ENCODE measurements at regions of chr15 and their contacts with region 1.

Region 1: GRCh38 chr15:31488426-31489204 is 162.0 kb downstream of the KLF13 start:
- DNase-seq: peak in 4 of 5 donors; percentile 64 to 69 (median 66)
- H3K4me3 ChIP-seq: no peak overlapping the region
- H3K4me3 Mint-ChIP-seq: peak overlapping the region in 1 of 8 donors; percentile 30
- H3K27ac ChIP-seq: no peak overlapping the region
- H3K27ac Mint-ChIP-seq: peak overlapping the region in 5 of 7 donors; percentile 17 to 77 (median 72)
- H3K4me1 ChIP-seq: peaks cover 37% of the 10 kb centered on the region
- H3K4me1 Mint-ChIP-seq: peaks cover 14 to 51% (median 24%) of the 10 kb centered on the region in 4 donors
- H3K27me3 ChIP-seq: no peaks in the 10 kb centered on the region
- H3K27me3 Mint-ChIP-seq: no peaks in the 10 kb centered on the region

Region 2: GRCh38 chr15:31128919-31129768 is 359.5 kb before region 1 on chr15:
- CTCF ChIA-PET with region 1: interaction called, 34 read pairs
- POLR2A ChIA-PET with region 1: interaction called, 3 read pairs
- intact Hi-C with region 1: loop called (anchors 1 kb)
- DNase-seq: peak; percentile 60 to 65 (median 62)
- H3K4me3 ChIP-seq: no peak overlapping the region
- H3K4me3 Mint-ChIP-seq: no peak overlapping the region
- H3K27ac ChIP-seq: no peak overlapping the region
- H3K27ac Mint-ChIP-seq: no peak overlapping the region
- H3K4me1 ChIP-seq: peaks cover 4% of the 10 kb centered on the region
- H3K4me1 Mint-ChIP-seq: peaks cover 0 to 1% (median 0%) of the 10 kb centered on the region in 4 donors
- H3K27me3 ChIP-seq: no peaks in the 10 kb centered on the region
- H3K27me3 Mint-ChIP-seq: peaks cover 0 to 2% of the 10 kb centered on the region in 2 donors

Region 3: GRCh38 chr15:31215490-31216214 is 273.0 kb before region 1 on chr15:
- CTCF ChIA-PET with region 1: interaction called, 70 read pairs
- POLR2A ChIA-PET with region 1: interaction called, 27 read pairs
- intact Hi-C with region 1: loop called (anchors 1 kb)
- DNase-seq: peak; percentile 70 to 76 (median 72)
- H3K4me3 ChIP-seq: peak overlapping the region in 1 of 2 donors; percentile 38
- H3K4me3 Mint-ChIP-seq: peak overlapping the region; percentile 54 to 76 (median 73)
- H3K27ac ChIP-seq: peak overlapping the region; percentile 52
- H3K27ac Mint-ChIP-seq: peak overlapping the region in 6 of 7 donors; percentile 32 to 87 (median 78)
- H3K4me1 ChIP-seq: peaks cover 30% of the 10 kb centered on the region
- H3K4me1 Mint-ChIP-seq: peaks cover 18 to 34% (median 28%) of the 10 kb centered on the region in 4 donors
- H3K27me3 ChIP-seq: no peaks in the 10 kb centered on the region
- H3K27me3 Mint-ChIP-seq: no peaks in the 10 kb centered on the region

Region 4: GRCh38 chr15:31326156-31326732 is 162.4 kb before region 1 on chr15:
- CTCF ChIA-PET with region 1: interaction called, 37 read pairs
- POLR2A ChIA-PET with region 1: interaction called, 67 read pairs
- intact Hi-C with region 1: loop called (anchors 1 kb)
- DNase-seq: peak; percentile 97 to 100 (median 100)
- H3K4me3 ChIP-seq: peak overlapping the region in 1 of 2 donors; percentile 77
- H3K4me3 Mint-ChIP-seq: peak overlapping the region; percentile 53 to 90 (median 78)
- H3K27ac ChIP-seq: peak overlapping the region; percentile 92
- H3K27ac Mint-ChIP-seq: peak overlapping the region; percentile 64 to 92 (median 83)
- H3K4me1 ChIP-seq: peaks cover 43% of the 10 kb centered on the region
- H3K4me1 Mint-ChIP-seq: peaks cover 26 to 48% (median 37%) of the 10 kb centered on the region in 4 donors
- H3K27me3 ChIP-seq: no peaks in the 10 kb centered on the region
- H3K27me3 Mint-ChIP-seq: no peaks in the 10 kb centered on the region

Region 5: DNA sequence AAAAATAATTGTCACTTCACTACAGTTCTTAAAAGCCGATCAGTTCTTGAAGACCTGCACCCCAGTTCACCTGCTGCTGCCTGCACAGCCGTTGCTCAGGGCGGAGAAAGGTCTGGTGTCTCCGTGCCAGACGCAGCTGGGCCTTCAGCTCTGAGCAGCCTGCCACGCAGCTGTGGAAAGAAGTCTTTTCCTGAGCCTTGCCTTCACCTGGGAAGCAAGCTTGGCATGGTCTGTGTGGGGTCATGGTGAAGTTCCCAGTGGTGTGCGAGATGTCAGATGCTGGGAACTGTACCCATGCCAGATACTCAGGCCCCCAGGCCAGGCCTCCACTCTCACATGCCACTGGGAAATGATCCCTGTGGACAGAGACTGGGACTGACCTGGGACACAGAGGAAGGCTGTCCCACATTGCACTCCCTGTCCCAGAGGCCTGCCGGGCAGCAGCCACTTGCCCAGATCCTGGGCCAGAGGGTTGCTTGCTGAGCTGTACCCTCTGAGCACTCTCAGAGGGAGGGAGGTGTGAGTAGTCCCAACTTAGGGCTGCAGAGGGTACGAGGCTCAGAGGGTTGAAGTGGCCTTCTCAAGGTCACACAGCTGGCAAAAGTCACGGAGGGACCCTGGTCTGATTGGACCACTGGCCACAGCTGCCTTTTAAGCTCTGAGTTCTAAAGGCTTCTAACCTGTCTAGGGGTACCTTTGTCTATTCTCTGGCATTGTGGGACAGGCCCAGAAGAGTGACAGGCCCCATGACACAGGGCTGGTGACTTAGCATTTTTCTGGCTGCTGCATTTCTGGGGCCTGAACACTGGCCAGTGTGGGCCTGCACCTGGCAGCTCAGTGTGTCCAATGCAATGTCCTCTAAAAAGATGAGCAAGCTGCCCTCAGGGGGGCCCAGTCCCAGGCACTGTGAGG is 106.6 kb before region 1 on chr15:
- CTCF ChIA-PET with region 1: interaction called, 13 read pairs
- POLR2A ChIA-PET with region 1: interaction called, 4 read pairs
- intact Hi-C with region 1: no loop called
- DNase-seq: no peak
- H3K4me3 ChIP-seq: no peak overlapping the region
- H3K4me3 Mint-ChIP-seq: no peak overlapping the region
- H3K27ac ChIP-seq: no peak overlapping the region
- H3K27ac Mint-ChIP-seq: peak overlapping the region; percentile 54 to 82 (median 78)
- H3K4me1 ChIP-seq: peaks cover 38% of the 10 kb centered on the region
- H3K4me1 Mint-ChIP-seq: peaks cover 33 to 63% (median 45%) of the 10 kb centered on the region in 4 donors
- H3K27me3 ChIP-seq: no peaks in the 10 kb centered on the region
- H3K27me3 Mint-ChIP-seq: no peaks in the 10 kb centered on the region

Region 6: GRCh38 chr15:31442203-31443111 is 46.2 kb before region 1 on chr15:
- CTCF ChIA-PET with region 1: interaction called, 174 read pairs
- POLR2A ChIA-PET with region 1: interaction called, 128 read pairs
- intact Hi-C with region 1: loop called (anchors 1 kb)
- DNase-seq: no peak
- H3K4me3 ChIP-seq: no peak overlapping the region
- H3K4me3 Mint-ChIP-seq: peak overlapping the region; percentile 63 to 75 (median 69)
- H3K27ac ChIP-seq: no peak overlapping the region
- H3K27ac Mint-ChIP-seq: peak overlapping the region in 5 of 7 donors; percentile 63 to 88 (median 68)
- H3K4me1 ChIP-seq: peaks cover 41% of the 10 kb centered on the region
- H3K4me1 Mint-ChIP-seq: peaks cover 27 to 56% (median 37%) of the 10 kb centered on the region in 4 donors
- H3K27me3 ChIP-seq: no peaks in the 10 kb centered on the region
- H3K27me3 Mint-ChIP-seq: no peaks in the 10 kb centered on the region

Region 7: DNA sequence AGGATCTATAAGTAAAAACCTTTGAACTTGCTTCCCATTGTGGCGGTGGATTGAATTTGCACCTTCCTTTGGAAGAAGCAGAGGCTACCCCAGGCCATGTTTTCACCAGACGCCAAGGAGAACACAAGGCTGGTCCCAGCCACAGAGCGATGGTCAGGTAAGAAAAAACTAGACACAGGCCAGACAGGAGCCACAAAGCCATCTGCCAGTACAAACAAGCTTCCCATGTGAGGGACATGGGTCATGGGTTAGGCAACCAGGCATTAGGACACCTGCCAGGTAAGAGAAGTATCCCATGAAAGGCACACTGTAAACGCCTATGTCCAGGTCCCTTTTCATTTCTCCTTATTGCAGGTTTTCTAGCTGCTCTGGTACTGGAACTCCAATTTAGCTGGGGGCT is 28.3 kb after region 1 on chr15:
- CTCF ChIA-PET with region 1: no interaction called
- POLR2A ChIA-PET with region 1: no interaction called
- intact Hi-C with region 1: no loop called
- DNase-seq: no peak
- H3K4me3 ChIP-seq: no peak overlapping the region
- H3K4me3 Mint-ChIP-seq: peak overlapping the region in 1 of 8 donors; percentile 32
- H3K27ac ChIP-seq: no peak overlapping the region
- H3K27ac Mint-ChIP-seq: no peak overlapping the region
- H3K4me1 ChIP-seq: peaks cover 9% of the 10 kb centered on the region
- H3K4me1 Mint-ChIP-seq: peaks cover 10 to 23% (median 17%) of the 10 kb centered on the region in 4 donors
- H3K27me3 ChIP-seq: no peaks in the 10 kb centered on the region
- H3K27me3 Mint-ChIP-seq: peaks cover 0 to 8% of the 10 kb centered on the region in 2 donors

Region 8: GRCh38 chr15:31526916-31527690 is 38.5 kb after region 1 on chr15:
- CTCF ChIA-PET with region 1: no interaction called
- POLR2A ChIA-PET with region 1: no interaction called
- intact Hi-C with region 1: no loop called
- DNase-seq: no peak
- H3K4me3 ChIP-seq: no peak overlapping the region
- H3K4me3 Mint-ChIP-seq: no peak overlapping the region
- H3K27ac ChIP-seq: no peak overlapping the region
- H3K27ac Mint-ChIP-seq: no peak overlapping the region
- H3K4me1 ChIP-seq: no peaks in the 10 kb centered on the region
- H3K4me1 Mint-ChIP-seq: no peaks in the 10 kb centered on the region
- H3K27me3 ChIP-seq: no peaks in the 10 kb centered on the region
- H3K27me3 Mint-ChIP-seq: peaks cover 7 to 8% of the 10 kb centered on the region in 2 donors

Region 9: GRCh38 chr15:31605371-31605931 is 116.8 kb after region 1 on chr15:
- CTCF ChIA-PET with region 1: no interaction called
- POLR2A ChIA-PET with region 1: no interaction called
- intact Hi-C with region 1: no loop called
- DNase-seq: no peak
- H3K4me3 ChIP-seq: no peak overlapping the region
- H3K4me3 Mint-ChIP-seq: no peak overlapping the region
- H3K27ac ChIP-seq: no peak overlapping the region
- H3K27ac Mint-ChIP-seq: no peak overlapping the region
- H3K4me1 ChIP-seq: no peaks in the 10 kb centered on the region
- H3K4me1 Mint-ChIP-seq: no peaks in the 10 kb centered on the region
- H3K27me3 ChIP-seq: no peaks in the 10 kb centered on the region
- H3K27me3 Mint-ChIP-seq: peaks cover 19 to 29% of the 10 kb centered on the region in 2 donors

Measured in CD4-positive, alpha-beta memory T cell (primary cell).